Dendritic cell treated with granulocyte-macrophage colony-stimulating factor and Interleukin-4, amounts not matched to agents 40 ng/mL and 50 ng/mL, for 4 days (primary cell): ENCODE measurements at regions of chr20 and their contacts with region 1.

Region 1: GRCh38 chr20:47501483-47502270 is at the start of gene NCOA3:
- H3K4me3 Mint-ChIP-seq: peak within 1 kb of the TSS; percentile 100
- H3K27ac Mint-ChIP-seq: peak within 1 kb of the TSS; percentile 99
- H3K4me1 Mint-ChIP-seq: peaks cover 40% of the 10 kb centered on the region
- H3K27me3 Mint-ChIP-seq: no peaks in the 10 kb centered on the region

Region 2: GRCh38 chr20:47418061-47418912 is 83.4 kb before region 1 on chr20:
- intact Hi-C with region 1: loop called (anchors 5 kb)
- H3K4me3 Mint-ChIP-seq: no peak overlapping the region
- H3K27ac Mint-ChIP-seq: no peak overlapping the region
- H3K4me1 Mint-ChIP-seq: peaks cover 63% of the 10 kb centered on the region
- H3K27me3 Mint-ChIP-seq: no peaks in the 10 kb centered on the region

Region 3: GRCh38 chr20:47453142-47453782 is 48.4 kb before region 1 on chr20:
- intact Hi-C with region 1: loop called (anchors 10 kb)
- H3K4me3 Mint-ChIP-seq: no peak overlapping the region
- H3K27ac Mint-ChIP-seq: peak overlapping the region; percentile 50
- H3K4me1 Mint-ChIP-seq: peaks cover 18% of the 10 kb centered on the region
- H3K27me3 Mint-ChIP-seq: no peaks in the 10 kb centered on the region

Region 4: GRCh38 chr20:47576516-47577033 is 74.9 kb after region 1 on chr20:
- intact Hi-C with region 1: loop called (anchors 2 kb)
- H3K4me3 Mint-ChIP-seq: no peak overlapping the region
- H3K27ac Mint-ChIP-seq: no peak overlapping the region
- H3K4me1 Mint-ChIP-seq: peaks cover 49% of the 10 kb centered on the region
- H3K27me3 Mint-ChIP-seq: no peaks in the 10 kb centered on the region

Region 5: GRCh38 chr20:47610247-47610944 is 108.7 kb after region 1 on chr20:
- intact Hi-C with region 1: loop called (anchors 10 kb)
- H3K4me3 Mint-ChIP-seq: no peak overlapping the region
- H3K27ac Mint-ChIP-seq: no peak overlapping the region
- H3K4me1 Mint-ChIP-seq: peaks cover 52% of the 10 kb centered on the region
- H3K27me3 Mint-ChIP-seq: no peaks in the 10 kb centered on the region